ENCODE measurements at regions of chr3 and their contacts with region 1.

Region 1: GRCh38 chr3:38843898-38844297 is 27.9 kb upstream of the SCN10A start:
- DNase-seq: peak; percentile 70
- ATAC-seq: peak; percentile 97
- H3K4me3 ChIP-seq: no peak overlapping the region
- H3K27ac ChIP-seq: no peak overlapping the region
- H3K4me1 ChIP-seq: no peaks in the 10 kb centered on the region
- H3K27me3 ChIP-seq: peaks cover 12% of the 10 kb centered on the region
- CTCF ChIP-seq: peak; percentile 76
- POLR2A ChIP-seq: no peak
- RAD21 ChIP-seq: peak; percentile 88

Region 2: GRCh38 chr3:38496131-38496910 is 347.6 kb before region 1 on chr3 and contains the start of gene EXOG:
- CTCF ChIA-PET with region 1: interaction called, 4 read pairs
- POLR2A ChIA-PET with region 1: no interaction called
- dilution Hi-C with region 1: no loop called
- in situ Hi-C with region 1: no loop called
- intact Hi-C with region 1: loop called (anchors 1 kb)
- DNase-seq: peak; percentile 89
- ATAC-seq: peak; percentile 85
- H3K4me3 ChIP-seq: peak within 1 kb of the TSS; percentile 91
- H3K27ac ChIP-seq: peak within 1 kb of the TSS; percentile 91
- H3K4me1 ChIP-seq: peaks cover 11% of the 10 kb centered on the region
- H3K27me3 ChIP-seq: no peaks in the 10 kb centered on the region
- CTCF ChIP-seq: peak; percentile 84
- POLR2A ChIP-seq: 0 out of 2 replicates have a peak, but pooled peaks have one; percentile 20
- RAD21 ChIP-seq: peak; percentile 68
- total RNA-seq, gene EXOG: 10.2 and 12.8 TPM in 2 replicates

Region 3: DNA sequence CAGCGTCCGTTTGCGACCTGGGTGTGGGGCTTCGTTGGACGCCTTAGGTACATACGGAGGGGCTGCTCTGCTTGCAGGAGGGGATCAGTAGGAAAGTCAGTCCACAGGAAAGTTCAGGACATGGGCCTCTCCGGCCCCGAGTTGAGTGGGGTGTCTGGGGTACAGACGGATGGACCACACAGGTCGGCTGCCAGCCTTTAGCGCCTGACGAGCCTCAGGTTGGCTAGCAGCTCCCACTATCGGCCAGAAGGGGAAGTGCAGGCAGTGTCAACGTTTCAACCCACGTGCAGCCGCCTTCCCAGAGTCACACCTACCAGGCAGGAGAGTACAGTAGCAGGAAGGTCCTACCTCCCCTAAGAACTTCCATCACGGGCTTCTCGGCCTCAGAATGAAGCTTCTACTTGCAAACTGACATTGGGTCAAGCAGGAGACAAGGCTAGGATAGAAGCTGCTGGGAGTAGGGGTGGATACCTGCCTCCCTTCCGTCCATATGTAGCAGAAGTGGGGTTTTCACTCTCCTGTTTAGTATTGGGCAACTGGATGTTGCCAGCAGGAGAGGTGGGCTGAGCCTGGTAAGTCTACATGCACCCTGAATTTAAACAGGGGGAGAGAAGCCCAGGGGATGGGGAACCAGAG is 192.6 kb before region 1 on chr3:
- CTCF ChIA-PET with region 1: interaction called, 7 read pairs
- POLR2A ChIA-PET with region 1: no interaction called
- dilution Hi-C with region 1: no loop called
- in situ Hi-C with region 1: no loop called
- intact Hi-C with region 1: loop called (anchors 2 kb)
- DNase-seq: peak; percentile 52
- ATAC-seq: peak; percentile 59
- H3K4me3 ChIP-seq: no peak overlapping the region
- H3K27ac ChIP-seq: no peak overlapping the region
- H3K4me1 ChIP-seq: peaks cover 3% of the 10 kb centered on the region
- H3K27me3 ChIP-seq: peaks cover 11% of the 10 kb centered on the region
- CTCF ChIP-seq: peak; percentile 93
- POLR2A ChIP-seq: no peak
- RAD21 ChIP-seq: peak; percentile 85

Region 4: DNA sequence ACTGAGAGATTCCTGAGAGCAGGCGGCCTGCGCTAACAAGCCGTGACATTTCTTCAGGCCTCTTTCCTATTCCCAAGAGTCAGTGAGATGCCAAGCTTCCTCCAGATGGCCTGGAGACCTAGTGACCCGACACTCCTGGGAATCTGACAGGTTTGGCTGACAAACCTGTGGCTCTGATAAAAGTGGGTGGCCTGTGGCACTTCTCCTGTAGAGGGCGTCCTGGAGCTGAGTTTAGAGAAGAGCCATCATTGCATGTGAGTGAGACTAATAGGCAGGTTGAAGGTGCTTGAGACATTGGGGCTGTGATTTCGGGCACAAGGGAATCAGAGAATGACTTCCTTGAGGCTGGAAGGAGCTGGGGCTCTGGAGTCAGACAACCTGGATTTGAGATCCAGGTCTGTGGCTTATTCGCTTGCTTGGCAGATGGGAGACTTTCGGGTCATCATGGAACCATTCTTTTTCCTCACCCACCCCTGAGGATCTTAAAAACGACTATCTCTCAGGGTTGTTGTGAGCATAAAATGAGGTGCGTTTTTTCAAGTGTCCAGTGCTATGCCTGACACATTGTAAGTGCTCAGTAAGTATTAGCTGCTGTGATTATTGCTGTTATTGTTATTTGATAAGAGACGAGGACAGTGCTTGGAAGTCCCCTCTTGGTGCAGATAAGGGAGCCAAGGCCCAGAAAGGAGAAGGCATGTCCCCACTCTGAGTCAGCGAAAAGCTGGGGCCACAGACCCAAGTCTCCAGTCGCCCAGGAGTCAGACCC is 105.1 kb before region 1 on chr3:
- CTCF ChIA-PET with region 1: interaction called, 6 read pairs
- POLR2A ChIA-PET with region 1: no interaction called
- dilution Hi-C with region 1: no loop called
- in situ Hi-C with region 1: loop called (anchors 10 kb)
- intact Hi-C with region 1: loop called (anchors 1 kb)
- DNase-seq: peak; percentile 28
- ATAC-seq: peak; percentile 49; the same call in 1 of the 2 replicates
- H3K4me3 ChIP-seq: no peak overlapping the region
- H3K27ac ChIP-seq: no peak overlapping the region
- H3K4me1 ChIP-seq: no peaks in the 10 kb centered on the region
- H3K27me3 ChIP-seq: 0 out of 2 replicates have a peak, but pooled peaks cover 2% of the 10 kb centered on the region
- CTCF ChIP-seq: peak; percentile 59
- POLR2A ChIP-seq: no peak
- RAD21 ChIP-seq: peak; percentile 62

Region 5: GRCh38 chr3:39025222-39025970 is 181.5 kb after region 1 on chr3:
- CTCF ChIA-PET with region 1: no interaction called
- POLR2A ChIA-PET with region 1: no interaction called
- dilution Hi-C with region 1: no loop called
- in situ Hi-C with region 1: no loop called
- intact Hi-C with region 1: loop called (anchors 2 kb)
- DNase-seq: no peak
- ATAC-seq: no peak; the same call in 1 of the 2 replicates
- H3K4me3 ChIP-seq: no peak overlapping the region
- H3K27ac ChIP-seq: no peak overlapping the region
- H3K4me1 ChIP-seq: no peaks in the 10 kb centered on the region
- H3K27me3 ChIP-seq: peaks cover 12% of the 10 kb centered on the region
- CTCF ChIP-seq: no peak
- POLR2A ChIP-seq: no peak
- RAD21 ChIP-seq: no peak